Cardiac septum (tissue), 1 donor: ENCODE measurements at regions of chr18 and their contacts with region 1.

Region 1: GRCh38 chr18:49728542-49728941 is 84.8 kb downstream of the ACAA2 start:
- DNase-seq: no peak

Region 2: GRCh38 chr18:49491857-49492693 is 236.5 kb before region 1 on chr18:
- intact Hi-C with region 1: no loop called
- DNase-seq: peak; percentile 93

Region 3: DNA sequence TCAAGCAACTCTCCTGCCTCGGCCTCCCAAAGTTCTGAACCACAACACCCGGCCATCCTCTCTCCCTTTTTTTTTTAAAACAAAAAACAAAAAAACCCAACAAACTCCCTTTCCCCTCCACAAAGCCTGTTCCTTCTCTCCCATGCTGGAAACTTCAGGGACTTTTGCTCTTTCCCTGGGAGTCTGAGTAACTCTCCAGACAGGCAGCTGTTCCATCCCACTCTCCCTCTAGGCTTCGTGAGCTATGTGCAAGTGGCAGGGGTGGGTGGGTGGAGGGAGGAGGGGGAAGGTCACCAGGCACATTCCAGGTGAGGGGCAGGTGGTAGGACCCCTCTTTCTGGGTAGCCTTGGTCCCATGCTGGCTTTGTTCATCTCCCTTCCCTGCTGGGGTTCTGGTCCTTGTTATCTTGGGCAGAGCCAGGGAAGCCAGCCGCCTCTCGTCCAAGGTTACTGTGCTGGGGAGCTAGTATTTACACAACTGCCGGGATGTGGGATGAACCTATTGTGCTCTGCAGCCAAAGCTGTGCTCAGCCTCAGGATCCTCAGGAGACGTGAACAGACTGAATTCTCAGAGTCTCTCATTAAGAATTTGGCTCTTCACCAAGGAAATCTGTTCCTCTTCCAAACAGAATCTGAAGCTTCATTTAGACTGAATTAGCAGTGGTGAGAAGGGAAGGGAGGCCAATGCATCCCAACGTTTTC is 59.8 kb before region 1 on chr18:
- intact Hi-C with region 1: loop called (anchors 10 kb)
- DNase-seq: no peak

Region 4: GRCh38 chr18:49690307-49690706 is 38.2 kb before region 1 on chr18:
- intact Hi-C with region 1: loop called (anchors 5 kb)
- DNase-seq: no peak